Activated B cell treated with CpG ODN at 0.5 μM for 24 hours (primary cell): ENCODE measurements at regions of chr11 and their contacts with region 1.

Region 1: DNA sequence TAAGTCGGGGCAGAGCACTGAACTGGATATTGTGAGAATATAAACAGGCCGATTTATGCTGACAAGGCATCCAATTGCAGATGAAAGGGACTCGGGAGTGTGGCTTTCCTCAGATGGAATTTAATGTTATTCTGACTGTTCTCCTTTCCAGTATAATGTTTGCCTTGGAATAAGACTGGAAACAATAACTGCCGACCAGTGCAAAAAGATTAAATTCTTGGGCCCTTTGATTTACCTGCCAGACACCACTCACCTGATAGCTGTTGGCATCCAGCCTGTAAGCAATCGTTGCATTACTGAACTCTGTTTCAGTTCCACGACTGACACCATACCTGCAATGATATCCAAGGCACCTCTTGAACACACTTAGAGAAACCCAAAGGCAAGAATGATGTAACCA is 10.9 kb downstream of the NUP160 start:
- DNase-seq: no peak
- ATAC-seq: no peak
- H3K4me3 Mint-ChIP-seq: no peak overlapping the region
- H3K27ac Mint-ChIP-seq: no peak overlapping the region
- H3K4me1 Mint-ChIP-seq: no peaks in the 10 kb centered on the region
- H3K27me3 Mint-ChIP-seq: no peaks in the 10 kb centered on the region
- CTCF ChIP-seq: no peak

Region 2: DNA sequence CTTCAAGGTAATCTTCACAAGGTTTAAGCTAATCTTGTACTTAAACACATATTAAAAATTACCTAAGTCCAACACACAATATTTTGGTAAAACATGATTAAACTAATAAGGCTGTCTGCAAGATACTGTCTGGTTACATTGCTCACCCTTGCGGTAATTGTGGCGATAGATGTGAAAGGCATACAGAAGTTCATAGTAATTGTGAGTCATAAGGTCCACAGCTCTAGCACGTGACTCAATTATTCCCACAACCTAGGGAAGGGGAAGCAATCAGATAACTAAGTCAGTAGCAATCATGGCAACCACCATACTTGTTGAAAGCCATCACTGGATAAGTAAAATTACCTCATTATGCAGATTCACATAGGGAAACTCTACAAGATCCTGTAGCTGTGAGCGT is 39.7 kb before region 1 on chr11:
- CTCF ChIA-PET with region 1: no interaction called
- POLR2A ChIA-PET with region 1: interaction called, 3 read pairs
- intact Hi-C with region 1: loop called (anchors 5 kb)
- DNase-seq: no peak
- ATAC-seq: no peak
- H3K4me3 Mint-ChIP-seq: no peak overlapping the region
- H3K27ac Mint-ChIP-seq: no peak overlapping the region
- H3K4me1 Mint-ChIP-seq: peaks cover 3% of the 10 kb centered on the region
- H3K27me3 Mint-ChIP-seq: no peaks in the 10 kb centered on the region
- CTCF ChIP-seq: no peak